HCT116 (cell line): ENCODE measurements at regions of chr15 and their contacts with region 1.

Region 1: DNA sequence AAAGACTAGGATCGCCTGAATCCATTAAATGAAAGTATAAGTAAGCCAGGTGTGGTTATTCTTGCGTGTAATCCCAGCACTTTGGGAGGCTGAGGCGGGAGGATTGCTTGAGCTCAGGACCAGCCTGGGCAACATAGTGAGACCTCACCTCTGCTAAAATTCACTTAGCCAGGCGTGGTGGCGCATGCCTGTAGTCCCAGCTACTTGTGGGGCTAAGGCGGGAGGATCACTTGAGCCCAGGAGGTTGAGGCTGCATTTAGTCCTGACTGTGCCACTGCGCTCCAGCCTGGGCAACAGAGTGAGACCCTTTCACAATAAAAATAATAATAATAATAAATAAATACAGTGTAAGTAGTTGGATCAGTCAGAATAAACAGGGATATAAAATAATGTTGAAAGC is 25.5 kb upstream of the HYKK start:
- DNase-seq: no peak
- ATAC-seq: no peak
- H3K4me3 ChIP-seq: no peak overlapping the region
- H3K27ac ChIP-seq: no peak overlapping the region
- H3K4me1 ChIP-seq: no peaks in the 10 kb centered on the region
- H3K27me3 ChIP-seq: no peaks in the 10 kb centered on the region
- CTCF ChIP-seq: no peak
- POLR2A ChIP-seq: no peak
- RAD21 ChIP-seq: no peak

Region 2: GRCh38 chr15:78618490-78618934 is 136.6 kb after region 1 on chr15:
- CTCF ChIA-PET with region 1: no interaction called
- POLR2A ChIA-PET with region 1: no interaction called
- RAD21 ChIA-PET with region 1: no interaction called
- intact Hi-C with region 1: no loop called
- DNase-seq: peak; percentile 73
- ATAC-seq: peak; percentile 93
- H3K4me3 ChIP-seq: no peak overlapping the region
- H3K27ac ChIP-seq: no peak overlapping the region
- H3K4me1 ChIP-seq: peaks cover 0 to 4% of the 10 kb centered on the region in 2 experiments; a peak in 1 of 4 replicates
- H3K27me3 ChIP-seq: no peaks in the 10 kb centered on the region
- CTCF ChIP-seq: peak; percentile 78 to 88 (median 81)
- POLR2A ChIP-seq: no peak
- RAD21 ChIP-seq: peak; percentile 82

Region 3: DNA sequence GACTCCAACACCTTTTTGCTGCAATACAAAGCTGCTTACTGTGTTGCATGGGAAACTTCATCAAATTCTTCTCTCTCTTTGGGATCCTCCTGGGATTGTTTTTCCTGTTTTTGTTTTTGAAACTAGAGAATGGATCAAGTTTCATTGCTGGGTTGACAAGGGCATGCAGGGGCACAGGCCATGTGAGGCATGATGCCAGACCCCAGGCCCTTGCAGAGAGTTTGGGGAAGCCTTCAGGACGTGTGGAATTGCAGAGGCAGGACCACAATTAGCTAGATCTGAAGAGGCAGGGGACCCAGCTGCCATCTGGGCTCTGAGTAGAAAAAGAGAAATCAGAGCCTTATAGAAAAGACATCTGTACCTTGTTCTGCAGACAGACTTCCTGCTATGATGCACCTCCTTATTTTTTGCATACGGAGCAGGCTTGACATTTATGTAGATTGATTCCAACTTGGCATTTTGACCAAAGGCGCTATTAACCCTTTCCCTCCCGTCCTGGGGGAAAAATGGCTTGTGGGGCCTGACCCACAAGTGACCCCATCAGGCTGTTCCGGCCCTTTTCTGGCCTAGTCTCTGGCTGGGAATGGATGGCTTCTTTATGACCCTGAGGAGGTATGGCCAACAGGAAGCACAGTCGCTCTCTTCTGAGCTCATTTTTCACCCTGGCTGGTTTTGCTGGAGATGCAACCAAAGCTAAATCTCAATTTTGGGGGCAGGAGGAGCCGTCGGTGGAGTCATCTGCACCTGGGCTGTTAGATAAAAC is 203.4 kb after region 1 on chr15:
- CTCF ChIA-PET with region 1: no interaction called
- POLR2A ChIA-PET with region 1: no interaction called
- RAD21 ChIA-PET with region 1: no interaction called
- intact Hi-C with region 1: no loop called
- DNase-seq: no peak
- ATAC-seq: no peak
- H3K4me3 ChIP-seq: no peak overlapping the region
- H3K27ac ChIP-seq: no peak overlapping the region
- H3K4me1 ChIP-seq: peaks cover 17 to 22% of the 10 kb centered on the region in 2 experiments
- H3K27me3 ChIP-seq: no peaks in the 10 kb centered on the region
- CTCF ChIP-seq: no peak
- POLR2A ChIP-seq: no peak
- RAD21 ChIP-seq: no peak

Region 4: GRCh38 chr15:78709263-78709882 is 227.5 kb after region 1 on chr15:
- CTCF ChIA-PET with region 1: no interaction called
- POLR2A ChIA-PET with region 1: no interaction called
- RAD21 ChIA-PET with region 1: no interaction called
- intact Hi-C with region 1: loop called (anchors 5 kb)
- DNase-seq: peak; percentile 36
- ATAC-seq: peak; percentile 99
- H3K4me3 ChIP-seq: peak overlapping the region in 1 of 2 experiments; percentile 20; a peak in 1 of 4 replicates
- H3K27ac ChIP-seq: no peak overlapping the region
- H3K4me1 ChIP-seq: peaks cover 2 to 9% of the 10 kb centered on the region in 2 experiments; a peak in 2 of 4 replicates
- H3K27me3 ChIP-seq: no peaks in the 10 kb centered on the region
- CTCF ChIP-seq: peak; percentile 85 to 92 (median 87)
- POLR2A ChIP-seq: no peak
- RAD21 ChIP-seq: peak; percentile 95